ENCODE measurements at regions of chr17 and their contacts with region 1.

Region 1: GRCh38 chr17:3893003-3893719 is at the start of gene CAMKK1:
- DNase-seq: peak; percentile 99
- H3K4me3 ChIP-seq: peak within 1 kb of the TSS; percentile 70 to 74
- H3K27ac ChIP-seq: peak within 1 kb of the TSS in 1 of 2 experiments; percentile 72; a peak in 1 of 4 replicates
- H3K4me1 ChIP-seq: peaks cover 9 to 39% of the 10 kb centered on the region in 2 experiments; a peak in 3 of 4 replicates
- H3K27me3 ChIP-seq: no peaks in the 10 kb centered on the region
- CTCF ChIP-seq: no peak
- EP300 ChIP-seq: no peak
- RAD21 ChIP-seq: no peak
- polyA plus RNA-seq, gene CAMKK1: 6.8 and 8.1 TPM in 2 replicates

Region 2: DNA sequence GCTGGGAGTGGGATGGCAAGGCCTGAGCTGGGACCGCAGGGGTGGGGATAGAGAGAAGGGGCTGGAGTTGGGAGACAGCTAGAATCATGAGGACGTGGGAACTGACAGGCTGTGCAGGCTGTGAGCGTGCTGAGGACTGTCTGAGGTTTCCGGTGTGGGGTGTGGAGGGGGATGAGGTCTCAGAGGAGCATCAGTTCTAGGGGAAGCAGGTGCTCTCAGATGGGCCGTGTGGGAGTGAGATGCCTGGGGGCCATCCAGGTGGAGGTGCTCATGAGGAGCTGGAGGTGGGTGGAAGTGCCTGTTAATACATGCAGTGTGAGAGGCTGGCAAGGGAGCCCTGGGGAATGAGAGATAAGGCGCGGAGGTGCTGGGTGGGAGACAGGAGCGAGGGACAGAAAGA is 142.2 kb before region 1 on chr17:
- CTCF ChIA-PET with region 1: no interaction called
- POLR2A ChIA-PET with region 1: no interaction called
- DNase-seq: no peak
- H3K4me3 ChIP-seq: no peak overlapping the region
- H3K27ac ChIP-seq: no peak overlapping the region
- H3K4me1 ChIP-seq: no peaks in the 10 kb centered on the region; a peak in 1 of 4 replicates
- H3K27me3 ChIP-seq: no peaks in the 10 kb centered on the region; the same call in 1 of the 2 replicates
- CTCF ChIP-seq: no peak
- EP300 ChIP-seq: no peak
- RAD21 ChIP-seq: no peak

Region 3: DNA sequence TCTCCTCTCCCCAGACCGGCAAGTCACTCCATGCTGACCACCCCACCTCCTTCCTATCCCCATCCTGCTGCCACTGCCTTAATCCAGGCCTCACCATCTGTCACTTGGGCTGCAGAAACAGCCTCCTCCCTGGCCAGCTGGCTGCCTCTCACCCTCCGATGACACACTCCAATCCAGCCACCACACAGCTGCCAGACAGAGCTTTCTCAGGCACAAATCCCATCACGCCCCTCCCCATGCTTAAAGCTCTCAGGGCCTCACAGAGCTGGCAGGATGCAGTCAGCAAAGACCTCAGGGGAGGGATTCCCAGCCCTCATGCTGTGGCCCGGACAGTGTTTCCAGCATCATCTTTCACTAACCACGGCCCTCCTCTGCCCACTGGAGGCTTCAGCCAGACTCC is 14.0 kb before region 1 on chr17:
- CTCF ChIA-PET with region 1: interaction called, 12 read pairs
- POLR2A ChIA-PET with region 1: interaction called, 9 read pairs
- DNase-seq: peak; percentile 85
- H3K4me3 ChIP-seq: no peak overlapping the region
- H3K27ac ChIP-seq: peak overlapping the region in 1 of 2 experiments; percentile 73; a peak in 2 of 4 replicates
- H3K4me1 ChIP-seq: peaks cover 0 to 23% of the 10 kb centered on the region in 2 experiments; a peak in 1 of 4 replicates
- H3K27me3 ChIP-seq: no peaks in the 10 kb centered on the region
- CTCF ChIP-seq: no peak
- EP300 ChIP-seq: no peak; a peak in 1 of 4 replicates
- RAD21 ChIP-seq: peak; percentile 3; the same call in 1 of the 2 replicates